ENCODE measurements at regions of chr17 and their contacts with region 1.

Region 1: GRCh38 chr17:82297714-82298537 is 19.5 kb downstream of the CD7 start:
- DNase-seq: peak; percentile 94 to 98 (median 96)
- H3K4me3 ChIP-seq: peak overlapping the region; percentile 13 to 65 (median 54)
- H3K4me3 Mint-ChIP-seq: peak overlapping the region; percentile 74 to 89
- H3K27ac ChIP-seq: peak overlapping the region; percentile 94 to 99
- H3K27ac Mint-ChIP-seq: peak overlapping the region; percentile 99 to 100 (median 100)
- H3K4me1 ChIP-seq: peaks cover 36 to 41% of the 10 kb centered on the region in 2 donors
- H3K4me1 Mint-ChIP-seq: peaks cover 62% of the 10 kb centered on the region
- H3K27me3 ChIP-seq: peaks cover 3 to 20% of the 10 kb centered on the region in 2 donors
- H3K27me3 Mint-ChIP-seq: peaks cover 22 to 27% (median 25%) of the 10 kb centered on the region in 3 donors
- CTCF ChIP-seq: no peak

Region 2: DNA sequence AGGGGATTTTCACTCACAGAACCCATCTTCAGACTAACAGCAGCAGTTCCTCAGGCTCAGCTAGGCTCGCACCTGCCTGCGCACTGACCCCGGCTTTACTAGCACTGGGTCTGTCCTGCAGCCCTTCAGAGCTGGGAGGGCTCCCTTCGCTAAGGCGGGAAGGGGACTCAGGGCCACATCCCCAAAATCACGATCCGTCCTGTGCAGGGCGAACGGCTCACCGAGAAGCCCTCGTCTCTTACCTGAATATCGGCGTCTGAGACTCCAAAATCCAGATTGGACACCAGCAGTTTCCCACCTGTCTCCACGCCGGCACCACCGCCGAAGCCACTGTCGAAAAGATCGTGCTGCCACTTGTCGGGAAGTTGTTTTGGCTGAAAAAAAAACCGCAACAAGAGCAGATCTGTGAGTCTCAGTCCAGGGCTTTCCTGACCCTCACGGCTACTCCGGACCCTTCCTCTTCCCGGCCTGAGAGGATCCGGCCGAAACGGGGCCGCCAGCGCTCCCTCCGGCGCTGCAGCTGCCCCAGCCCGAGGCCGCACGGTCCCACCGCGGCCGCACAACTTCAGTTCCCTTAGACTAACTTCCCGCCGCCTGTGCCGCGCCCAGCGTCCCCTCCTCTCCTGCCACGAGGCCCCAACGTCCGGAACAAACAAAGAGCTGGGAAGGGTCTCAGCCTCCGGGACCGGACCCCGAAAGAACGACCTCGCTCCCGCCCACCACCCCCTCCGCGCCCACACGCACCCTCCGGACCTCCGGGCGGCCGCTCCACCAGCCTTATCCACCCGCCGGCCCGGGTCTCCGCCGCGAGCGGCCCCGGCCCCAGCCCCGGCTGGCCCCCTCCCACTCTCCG is 407.3 kb before region 1 on chr17:
- intact Hi-C with region 1: no loop called
- DNase-seq: peak in 1 of 3 donors; percentile 38
- H3K4me3 ChIP-seq: peak overlapping the region; percentile 52 to 90 (median 75)
- H3K4me3 Mint-ChIP-seq: peak overlapping the region; percentile 89 to 90
- H3K27ac ChIP-seq: peak overlapping the region; percentile 55 to 82
- H3K27ac Mint-ChIP-seq: peak overlapping the region; percentile 85 to 98 (median 93)
- H3K4me1 ChIP-seq: peaks cover 16 to 25% of the 10 kb centered on the region in 2 donors
- H3K4me1 Mint-ChIP-seq: peaks cover 15% of the 10 kb centered on the region
- H3K27me3 ChIP-seq: no peaks in the 10 kb centered on the region
- H3K27me3 Mint-ChIP-seq: peaks cover 0 to 2% (median 0%) of the 10 kb centered on the region in 3 donors
- CTCF ChIP-seq: no peak

Region 3: DNA sequence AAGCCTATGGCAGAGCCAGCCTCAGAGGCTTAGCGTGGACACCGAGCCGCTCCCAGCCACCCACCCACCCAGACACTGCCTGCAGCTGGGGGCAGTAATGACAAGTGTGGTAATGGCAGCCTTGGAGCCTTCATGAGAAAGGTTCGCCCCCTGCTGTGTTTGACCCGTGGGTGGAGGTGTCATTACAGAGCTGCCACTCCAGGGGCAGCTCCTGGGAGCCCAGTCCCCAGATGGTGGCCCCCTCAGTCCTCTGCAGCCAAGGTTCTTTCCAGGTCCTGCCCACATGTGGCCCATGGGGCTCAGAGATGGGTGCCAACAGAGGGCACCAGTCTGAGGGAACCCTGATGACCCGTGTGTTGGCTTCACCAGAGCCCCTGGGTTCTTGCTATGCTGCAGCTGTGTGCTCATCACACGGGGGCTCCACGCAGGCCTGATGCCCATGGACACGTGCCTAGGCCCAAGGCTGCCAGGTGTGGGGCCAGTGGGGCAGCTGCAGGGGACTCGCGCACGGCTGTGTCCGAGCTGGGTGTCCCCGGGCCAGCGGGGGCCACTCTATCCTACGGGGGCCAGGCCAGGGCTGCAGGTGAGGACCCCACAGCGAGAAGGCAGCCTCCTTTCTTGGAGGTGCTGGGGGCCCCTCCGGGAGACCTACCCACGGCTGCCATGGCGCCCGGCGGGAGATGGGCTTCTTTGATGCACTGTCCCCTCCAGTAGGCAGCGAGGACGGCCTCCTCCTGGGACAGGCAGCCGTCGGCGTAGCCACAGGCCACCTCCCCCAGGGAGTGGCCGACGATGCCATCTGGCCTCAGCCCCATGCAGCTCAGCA is 208.0 kb before region 1 on chr17:
- intact Hi-C with region 1: no loop called
- DNase-seq: no peak
- H3K4me3 ChIP-seq: no peak overlapping the region
- H3K4me3 Mint-ChIP-seq: no peak overlapping the region
- H3K27ac ChIP-seq: no peak overlapping the region
- H3K27ac Mint-ChIP-seq: no peak overlapping the region
- H3K4me1 ChIP-seq: no peaks in the 10 kb centered on the region
- H3K4me1 Mint-ChIP-seq: no peaks in the 10 kb centered on the region
- H3K27me3 ChIP-seq: no peaks in the 10 kb centered on the region
- H3K27me3 Mint-ChIP-seq: peaks cover 0 to 2% (median 0%) of the 10 kb centered on the region in 3 donors
- CTCF ChIP-seq: no peak

Region 4: DNA sequence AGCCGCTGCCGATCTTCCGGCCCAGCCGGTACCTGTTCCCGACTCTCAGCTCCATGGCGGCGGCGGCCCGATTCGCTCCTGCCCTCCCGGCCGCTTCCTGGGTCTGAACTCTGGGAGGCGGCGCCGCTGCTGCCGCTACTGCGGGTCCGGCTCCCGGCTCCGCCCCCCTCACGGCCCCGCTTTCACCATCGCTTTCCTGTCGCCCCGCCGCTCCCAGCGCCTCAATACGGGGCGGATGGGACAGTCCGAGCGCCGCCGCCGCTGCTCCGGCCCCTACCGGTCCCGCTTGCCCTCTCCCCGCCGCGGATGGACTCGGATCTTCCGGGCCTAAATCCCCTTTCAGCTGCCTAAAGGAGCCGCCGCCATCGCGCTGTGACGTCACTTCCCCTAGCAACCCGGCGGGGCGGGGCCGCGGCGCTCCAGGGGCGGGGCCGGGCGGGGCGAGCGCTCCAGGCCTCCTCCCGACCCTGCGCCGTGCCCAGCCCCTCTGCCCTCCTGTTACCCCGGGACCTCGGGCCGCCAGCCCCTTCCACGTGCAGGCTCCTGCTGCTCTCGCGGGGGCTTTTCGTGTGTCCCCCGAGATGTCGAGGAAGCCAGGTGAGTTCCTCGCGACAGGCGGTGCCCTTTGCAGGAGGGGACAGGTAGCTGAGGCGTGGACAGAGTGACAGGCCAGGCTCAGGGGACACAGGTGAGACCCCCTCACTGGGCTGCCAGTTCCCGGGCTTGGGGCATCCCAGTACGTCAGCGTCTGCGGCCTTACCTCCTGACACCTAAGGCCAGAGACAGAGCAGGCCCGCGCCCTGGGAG is 24.4 kb before region 1 on chr17 and contains the start of gene CSNK1D:
- intact Hi-C with region 1: loop called in 1 of 2 experiments (anchors 2 kb)
- DNase-seq: peak; percentile 81 to 87 (median 85)
- H3K4me3 ChIP-seq: peak within 1 kb of the TSS; percentile 69 to 88 (median 81)
- H3K4me3 Mint-ChIP-seq: peak within 1 kb of the TSS; percentile 90 to 98
- H3K27ac ChIP-seq: peak within 1 kb of the TSS; percentile 67 to 89
- H3K27ac Mint-ChIP-seq: peak within 1 kb of the TSS; percentile 93 to 98 (median 97)
- H3K4me1 ChIP-seq: peaks cover 39 to 62% of the 10 kb centered on the region in 2 donors
- H3K4me1 Mint-ChIP-seq: peaks cover 61% of the 10 kb centered on the region
- H3K27me3 ChIP-seq: no peaks in the 10 kb centered on the region
- H3K27me3 Mint-ChIP-seq: peaks cover 0 to 3% (median 0%) of the 10 kb centered on the region in 3 donors
- CTCF ChIP-seq: no peak
- polyA plus RNA-seq, gene CSNK1D: 47.0 to 299 (median 60.9) TPM

Region 5: DNA sequence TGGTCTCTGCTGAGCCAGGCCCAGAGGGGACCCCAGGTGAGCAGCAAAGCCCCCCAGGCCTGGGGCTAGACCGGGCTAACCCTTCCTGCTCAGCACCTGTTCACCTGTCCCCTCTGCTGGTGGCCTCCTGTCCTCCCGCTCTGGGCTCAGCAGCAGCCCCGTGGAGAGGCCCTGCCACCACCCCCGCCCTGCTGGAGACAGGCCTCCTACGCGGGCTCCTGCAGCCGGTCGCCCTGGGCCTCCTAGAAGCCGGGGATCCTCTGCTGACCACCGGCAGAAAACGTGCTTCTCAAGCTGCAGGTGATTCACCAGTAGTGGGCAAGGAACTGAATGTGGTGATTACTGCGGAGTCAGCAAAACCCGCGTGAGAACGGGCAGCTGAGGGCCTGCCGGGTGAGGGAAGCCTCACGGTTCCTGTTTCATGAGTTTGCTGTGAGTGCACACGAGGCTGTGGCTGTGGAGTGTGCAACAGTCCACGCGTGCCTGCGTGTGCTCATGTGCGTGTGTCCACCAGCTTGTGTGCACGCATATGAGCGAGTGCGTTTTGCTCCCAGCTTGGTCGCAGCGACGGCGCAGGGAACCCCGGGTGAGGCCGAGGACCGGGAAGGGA is 34.8 kb after region 1 on chr17:
- intact Hi-C with region 1: loop called in 1 of 2 experiments (anchors 5 kb)
- DNase-seq: peak; percentile 90 to 95 (median 94)
- H3K4me3 ChIP-seq: peak overlapping the region; percentile 70 to 92 (median 88)
- H3K4me3 Mint-ChIP-seq: peak overlapping the region; percentile 91 to 96
- H3K27ac ChIP-seq: peak overlapping the region; percentile 68 to 92
- H3K27ac Mint-ChIP-seq: peak overlapping the region; percentile 81 to 93 (median 90)
- H3K4me1 ChIP-seq: peaks cover 36 to 61% of the 10 kb centered on the region in 2 donors
- H3K4me1 Mint-ChIP-seq: peaks cover 45% of the 10 kb centered on the region
- H3K27me3 ChIP-seq: no peaks in the 10 kb centered on the region
- H3K27me3 Mint-ChIP-seq: peaks cover 11 to 34% (median 12%) of the 10 kb centered on the region in 3 donors
- CTCF ChIP-seq: no peak